GM23248 (cell line): ENCODE measurements at regions of chr18 and their contacts with region 1.

Region 1: DNA sequence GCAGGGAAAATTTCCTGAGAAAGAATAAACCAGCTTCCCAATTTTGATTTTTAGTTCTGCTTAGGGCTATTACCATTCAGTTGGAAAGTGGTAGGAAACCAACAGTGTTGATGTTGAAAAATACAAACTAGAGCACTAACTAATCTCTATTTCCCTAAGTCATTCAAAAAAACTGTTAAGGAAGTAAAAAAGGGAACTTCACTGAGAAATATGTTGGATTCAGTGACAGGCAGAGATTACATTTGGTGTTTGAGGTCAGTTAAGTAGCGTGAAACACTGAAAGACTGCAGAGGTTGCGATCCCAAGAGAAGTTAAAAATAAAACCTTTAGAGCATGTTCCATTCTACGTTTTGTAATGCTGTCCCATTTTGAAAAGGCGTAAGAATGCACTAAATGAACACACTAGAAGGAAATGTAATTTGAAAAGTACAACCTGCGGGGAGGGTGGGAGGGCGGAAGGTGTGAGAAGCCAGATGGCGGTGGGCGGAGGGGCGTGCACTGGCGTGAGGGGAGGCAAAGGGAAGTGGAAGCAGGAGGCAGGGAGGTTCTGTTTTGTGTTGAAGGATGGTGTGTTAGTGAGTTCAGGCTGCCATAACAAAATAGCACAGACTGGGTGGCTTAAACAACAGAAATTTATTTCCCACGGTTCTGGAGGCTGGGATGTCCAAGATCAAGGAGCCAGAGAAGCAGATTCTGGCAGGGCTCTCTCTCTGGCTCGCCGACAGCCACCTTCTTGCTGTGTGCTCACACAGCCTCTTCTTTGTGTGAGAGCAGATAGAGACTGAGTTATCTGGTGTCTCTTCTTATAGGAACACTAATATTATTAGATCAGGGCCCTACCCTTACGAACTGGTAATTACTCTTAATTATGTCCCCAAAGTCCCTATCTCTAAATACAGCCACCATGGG is 94.3 kb upstream of the KCTD1 start:
- DNase-seq: no peak
- H3K4me3 ChIP-seq: no peak overlapping the region
- H3K27ac ChIP-seq: no peak overlapping the region
- H3K4me1 ChIP-seq: no peaks in the 10 kb centered on the region
- H3K27me3 ChIP-seq: no peaks in the 10 kb centered on the region; the same call in 1 of the 2 replicates

Region 2: GRCh38 chr18:26405190-26405801 is 237.4 kb before region 1 on chr18:
- in situ Hi-C with region 1: loop called (anchors 10 kb)
- DNase-seq: peak; percentile 58
- H3K4me3 ChIP-seq: no peak overlapping the region
- H3K27ac ChIP-seq: no peak overlapping the region
- H3K4me1 ChIP-seq: no peaks in the 10 kb centered on the region
- H3K27me3 ChIP-seq: no peaks in the 10 kb centered on the region